Common myeloid progenitor, CD34-positive (primary cell): ENCODE measurements at regions of chr2 and their contacts with region 1.

Region 1: GRCh38 chr2:230873476-230874451 is 9.0 kb downstream of the ITM2C start:
- DNase-seq: no peak
- H3K4me3 ChIP-seq: no peak overlapping the region
- H3K27ac ChIP-seq: peak overlapping the region in 1 of 2 experiments; percentile 41
- H3K4me1 ChIP-seq: peaks cover under 1 to 98% (median 88%) of the 10 kb centered on the region in 4 experiments
- H3K27me3 ChIP-seq: no peaks in the 10 kb centered on the region

Region 2: DNA sequence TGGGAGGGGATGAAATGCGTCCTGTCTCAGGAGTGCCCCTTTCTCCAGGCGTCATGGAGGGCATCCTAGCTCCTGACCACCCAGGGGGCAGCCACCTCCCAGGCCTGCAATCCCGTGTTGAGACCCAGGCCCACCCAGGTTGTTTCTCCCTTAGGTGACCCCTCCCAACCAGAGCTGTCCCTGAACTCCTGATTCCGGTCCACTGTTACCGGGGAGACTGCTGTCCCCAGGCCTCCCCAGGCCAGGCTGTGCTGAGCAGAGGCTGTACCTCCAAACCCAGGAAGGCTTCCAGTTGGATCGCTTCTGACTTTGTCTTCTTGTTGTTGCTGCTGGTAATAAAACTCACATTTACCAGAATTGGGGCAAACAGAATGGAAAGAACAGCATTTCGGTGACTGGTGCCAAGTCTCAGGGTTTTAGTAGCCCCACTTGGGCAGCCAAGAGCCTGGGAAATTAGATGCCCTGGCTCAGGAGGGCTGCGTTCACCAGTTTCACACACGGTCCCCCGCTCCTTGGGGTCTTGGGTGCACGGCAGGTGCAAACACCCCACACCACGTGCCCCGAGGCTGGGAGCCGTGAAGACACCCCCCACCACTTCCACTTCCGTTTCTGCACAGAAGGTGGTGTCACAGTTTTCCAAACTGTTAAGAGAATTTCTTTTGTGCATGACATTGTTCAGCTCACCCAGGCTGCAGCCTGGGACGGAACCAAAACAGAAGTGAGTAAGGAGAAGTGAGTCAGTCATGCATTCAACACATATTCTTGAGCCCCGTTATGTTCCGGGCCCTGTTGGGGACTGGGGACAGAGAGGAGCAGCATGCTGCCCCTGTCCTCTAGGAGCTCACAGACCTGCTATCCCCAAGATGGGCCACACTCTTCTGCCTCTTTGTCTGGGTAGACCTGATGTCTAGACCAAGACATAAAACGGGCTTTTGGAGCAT is 20.3 kb after region 1 on chr2:
- CTCF ChIA-PET with region 1: interaction called, 17 read pairs
- POLR2A ChIA-PET with region 1: no interaction called
- DNase-seq: peak in 2 of 3 donors; percentile 44 to 67
- H3K4me3 ChIP-seq: no peak overlapping the region
- H3K27ac ChIP-seq: no peak overlapping the region
- H3K4me1 ChIP-seq: peaks cover 2 to 33% (median 16%) of the 10 kb centered on the region in 4 experiments
- H3K27me3 ChIP-seq: no peaks in the 10 kb centered on the region

Region 3: DNA sequence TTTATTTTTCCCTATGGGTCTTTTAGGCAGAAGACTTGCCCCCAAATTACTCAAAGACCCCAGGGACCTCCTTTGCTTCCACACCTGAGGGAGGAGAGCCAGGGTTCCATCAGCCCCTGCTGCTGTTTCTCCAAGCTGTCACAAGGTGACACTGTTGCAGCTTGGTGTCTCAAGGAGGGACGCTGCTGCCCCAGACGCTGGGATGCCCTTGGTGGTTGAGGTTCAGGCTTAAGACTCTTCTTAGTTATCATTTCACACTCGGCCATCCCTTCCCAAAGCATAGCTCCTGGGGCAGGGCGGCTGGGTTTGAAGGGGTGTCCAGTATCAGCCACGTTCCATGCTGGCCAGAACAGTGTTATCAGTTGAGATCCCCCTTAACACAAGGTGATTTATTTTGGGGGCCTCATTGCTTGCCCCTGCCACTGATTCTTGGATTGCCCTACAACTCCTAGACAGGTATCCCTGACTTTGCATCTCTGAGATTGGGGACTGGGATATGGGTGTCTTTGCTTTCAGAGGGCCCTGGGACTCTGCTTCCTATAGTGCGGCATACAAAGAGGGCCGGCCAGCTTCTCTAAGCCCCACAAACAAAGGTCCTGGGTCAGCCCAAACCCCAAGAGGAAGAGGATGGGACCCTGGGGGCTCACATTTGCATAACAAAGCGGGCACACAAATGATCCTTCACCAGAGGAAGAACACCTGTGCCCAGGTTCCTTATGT is 28.6 kb after region 1 on chr2:
- CTCF ChIA-PET with region 1: interaction called, 12 read pairs
- POLR2A ChIA-PET with region 1: interaction called, 3 read pairs
- DNase-seq: peak; percentile 64 to 85 (median 74)
- H3K4me3 ChIP-seq: no peak overlapping the region
- H3K27ac ChIP-seq: no peak overlapping the region
- H3K4me1 ChIP-seq: peaks cover 0 to 4% (median 0%) of the 10 kb centered on the region in 4 experiments
- H3K27me3 ChIP-seq: no peaks in the 10 kb centered on the region